Transverse colon (tissue), 4 donors: ENCODE measurements at regions of chr20 and their contacts with region 1.

Region 1: GRCh38 chr20:31894980-31895675 is 24.7 kb downstream of the TTLL9 start:
- DNase-seq: peak; percentile 45
- H3K4me3 ChIP-seq: no peak overlapping the region
- H3K27ac ChIP-seq: peak overlapping the region in 3 of 4 donors; percentile 31 to 73 (median 49)
- H3K4me1 ChIP-seq: no peaks in the 10 kb centered on the region
- H3K27me3 ChIP-seq: no peaks in the 10 kb centered on the region
- CTCF ChIP-seq: no peak
- EP300 ChIP-seq: no peak
- POLR2A ChIP-seq: no peak

Region 2: GRCh38 chr20:31661625-31662371 is 233.3 kb before region 1 on chr20:
- in situ Hi-C with region 1: no loop called
- intact Hi-C with region 1: no loop called
- DNase-seq: peak; percentile 85
- H3K4me3 ChIP-seq: peak overlapping the region in 3 of 4 donors; percentile 12 to 53 (median 33)
- H3K27ac ChIP-seq: peak overlapping the region; percentile 66 to 84 (median 79)
- H3K4me1 ChIP-seq: peaks cover 30 to 57% (median 51%) of the 10 kb centered on the region in 4 donors
- H3K27me3 ChIP-seq: no peaks in the 10 kb centered on the region
- CTCF ChIP-seq: peak; percentile 61 to 87 (median 85)
- EP300 ChIP-seq: no peak
- POLR2A ChIP-seq: peak; percentile 38

Region 3: GRCh38 chr20:31829731-31830130 is 65.4 kb before region 1 on chr20:
- in situ Hi-C with region 1: no loop called
- intact Hi-C with region 1: loop called (anchors 2 kb)
- DNase-seq: no peak
- H3K4me3 ChIP-seq: no peak overlapping the region
- H3K27ac ChIP-seq: no peak overlapping the region
- H3K4me1 ChIP-seq: no peaks in the 10 kb centered on the region
- H3K27me3 ChIP-seq: no peaks in the 10 kb centered on the region
- CTCF ChIP-seq: no peak
- EP300 ChIP-seq: no peak
- POLR2A ChIP-seq: no peak

Region 4: GRCh38 chr20:31996996-31997395 is 101.9 kb after region 1 on chr20:
- in situ Hi-C with region 1: no loop called
- intact Hi-C with region 1: no loop called
- DNase-seq: no peak
- H3K4me3 ChIP-seq: no peak overlapping the region
- H3K27ac ChIP-seq: no peak overlapping the region
- H3K4me1 ChIP-seq: no peaks in the 10 kb centered on the region
- H3K27me3 ChIP-seq: peaks cover 41% of the 10 kb centered on the region
- CTCF ChIP-seq: no peak
- EP300 ChIP-seq: no peak
- POLR2A ChIP-seq: no peak

Region 5: GRCh38 chr20:32807706-32808105 is 912.6 kb after region 1 on chr20:
- in situ Hi-C with region 1: no loop called
- intact Hi-C with region 1: no loop called
- DNase-seq: no peak
- H3K4me3 ChIP-seq: no peak overlapping the region
- H3K27ac ChIP-seq: no peak overlapping the region
- H3K4me1 ChIP-seq: no peaks in the 10 kb centered on the region
- H3K27me3 ChIP-seq: no peaks in the 10 kb centered on the region
- CTCF ChIP-seq: no peak
- EP300 ChIP-seq: no peak
- POLR2A ChIP-seq: no peak